Lower leg skin (tissue), 4 donors: ENCODE measurements at regions of chr6 and their contacts with region 1.

Region 1: GRCh38 chr6:28871335-28872156 is 52.2 kb downstream of the TRIM27 start:
- DNase-seq: no peak
- H3K4me3 ChIP-seq: no peak overlapping the region
- CTCF ChIP-seq: no peak
- POLR2A ChIP-seq: no peak

Region 2: DNA sequence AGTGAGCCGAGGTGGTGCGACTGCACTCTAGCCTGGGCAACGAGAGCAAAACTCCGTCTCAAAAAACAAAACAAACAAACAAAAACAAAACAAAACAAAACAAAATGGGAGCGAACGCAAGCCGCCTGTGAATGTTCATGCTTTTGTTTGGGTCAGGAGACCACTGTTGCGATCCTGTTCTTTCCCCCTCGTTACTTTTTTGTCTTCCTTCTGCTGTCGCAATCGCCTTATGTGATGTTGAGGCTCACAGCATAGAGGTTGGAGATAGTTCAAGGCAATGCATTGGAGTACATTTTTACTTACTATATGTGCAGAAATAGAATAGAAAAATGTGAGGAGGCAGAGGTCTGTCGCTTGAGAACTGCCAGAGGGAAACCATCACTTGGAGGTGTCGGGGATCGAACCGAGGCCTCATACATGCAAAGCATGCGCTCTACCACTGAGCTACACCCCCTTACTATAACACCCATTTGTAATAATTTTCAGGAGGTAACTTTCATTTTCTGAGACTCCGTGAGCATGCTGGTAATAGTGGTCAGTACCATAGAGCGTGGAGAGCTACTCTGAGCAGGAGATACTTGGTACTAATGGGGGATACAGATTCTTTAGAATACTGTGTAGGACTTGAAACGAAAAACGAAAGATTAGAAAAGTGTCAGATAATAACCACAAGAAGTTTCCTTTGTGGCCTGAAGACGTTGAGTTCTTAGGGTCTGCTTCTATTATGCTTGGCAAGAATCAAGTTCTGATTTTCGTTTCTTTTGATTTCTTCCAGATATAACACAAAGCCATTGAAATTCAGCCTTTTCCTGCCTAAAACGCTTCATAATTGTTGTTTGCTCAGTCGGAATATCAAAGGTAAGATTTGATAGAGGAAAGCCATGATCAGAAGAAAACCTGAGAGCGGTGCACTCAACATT is 68.9 kb before region 1 on chr6:
- intact Hi-C with region 1: loop called (anchors 2 kb)
- DNase-seq: no peak
- H3K4me3 ChIP-seq: no peak overlapping the region
- CTCF ChIP-seq: no peak
- POLR2A ChIP-seq: no peak